GM10248 (cell line): ENCODE measurements at regions of chr7 and their contacts with region 1.

Region 1: GRCh38 chr7:43639858-43640491 is 57.1 kb downstream of the STK17A start:
- DNase-seq: no peak
- CTCF ChIP-seq: no peak

Region 2: GRCh38 chr7:43658718-43659548 is 19.0 kb after region 1 on chr7:
- CTCF ChIA-PET with region 1: no interaction called
- POLR2A ChIA-PET with region 1: no interaction called
- DNase-seq: peak; percentile 55
- CTCF ChIP-seq: no peak

Region 3: DNA sequence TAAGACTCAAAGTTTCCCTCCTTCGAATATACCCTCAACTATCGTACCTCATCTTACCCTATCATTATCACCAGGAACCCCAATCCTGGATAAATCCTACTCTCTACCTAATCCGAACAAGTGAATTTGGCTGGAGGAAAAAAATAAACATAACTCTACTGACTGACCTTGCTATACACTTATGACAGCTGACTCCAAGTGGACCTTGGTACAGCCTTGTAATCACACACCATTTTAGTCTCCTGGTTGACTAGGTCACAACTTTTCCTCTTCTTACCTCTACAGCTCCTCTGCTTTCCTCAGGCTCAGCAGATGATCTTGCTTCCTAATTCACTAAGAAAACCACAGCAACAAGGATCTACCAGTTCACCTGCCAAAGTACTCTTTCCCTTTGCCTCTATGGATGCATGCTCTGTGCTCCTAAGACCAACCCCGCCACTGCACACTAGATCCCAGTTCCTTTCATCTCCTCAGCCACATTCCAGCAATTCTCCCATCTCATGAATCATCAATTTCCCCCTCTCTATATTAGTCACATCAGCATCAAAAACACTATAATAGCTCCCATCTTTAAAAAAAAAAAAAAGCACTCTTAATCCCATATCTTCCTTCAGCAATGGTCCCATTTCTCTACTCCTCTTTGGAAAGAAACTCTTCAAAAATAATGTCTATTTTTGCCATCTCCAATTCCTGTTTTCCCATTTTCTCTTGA is 53.9 kb after region 1 on chr7:
- CTCF ChIA-PET with region 1: interaction called, 93 read pairs
- POLR2A ChIA-PET with region 1: no interaction called
- DNase-seq: no peak
- CTCF ChIP-seq: no peak